Posterior cingulate gyrus (tissue), 11 donors: ENCODE measurements at regions of chr1 and their contacts with region 1.

Region 1: DNA sequence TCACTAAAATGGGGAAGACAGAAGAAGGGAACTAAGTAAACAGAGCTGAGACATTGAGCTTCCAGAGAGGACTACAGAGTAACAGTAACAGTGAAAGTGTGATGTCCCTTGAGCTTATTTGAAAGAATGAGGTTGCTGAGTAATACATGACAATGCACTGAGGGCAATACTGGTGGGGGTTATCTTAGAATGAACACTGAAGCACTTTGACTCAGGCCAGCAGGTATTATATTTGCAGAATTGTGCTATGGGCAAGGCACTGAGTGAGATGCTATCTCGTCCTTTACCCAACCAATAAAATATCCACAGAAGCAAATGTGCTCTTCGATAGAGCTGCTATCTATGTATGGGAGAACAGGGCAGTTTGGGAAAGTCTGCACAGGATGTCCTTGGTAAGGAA is 133.2 kb downstream of the DISP1 start:
- DNase-seq: no peak

Region 2: GRCh38 chr1:222814536-222815439 is 133.3 kb before region 1 on chr1 and contains the start of gene DISP1:
- intact Hi-C with region 1: loop called (anchors 10 kb)
- DNase-seq: peak; percentile 56 to 96 (median 78)